Naive thymus-derived CD4-positive, alpha-beta T cell (primary cell): ENCODE measurements at regions of chr1 and their contacts with region 1.

Region 1: GRCh38 chr1:25990702-25991395 is 7.0 kb downstream of the PAFAH2 start:
- DNase-seq: peak in 8 of 9 donors; percentile 31 to 59 (median 56)
- ATAC-seq: peak; percentile 93
- H3K4me3 ChIP-seq: peak overlapping the region; percentile 63
- H3K4me3 Mint-ChIP-seq: peak overlapping the region; percentile 82 to 97 (median 90)
- H3K27ac ChIP-seq: peak overlapping the region; percentile 86
- H3K27ac Mint-ChIP-seq: peak overlapping the region; percentile 81 to 94 (median 91)
- H3K4me1 ChIP-seq: peaks cover 36 to 37% of the 10 kb centered on the region in 2 donors
- H3K4me1 Mint-ChIP-seq: peaks cover 42 to 89% (median 84%) of the 10 kb centered on the region in 7 donors
- H3K27me3 ChIP-seq: no peaks in the 10 kb centered on the region
- H3K27me3 Mint-ChIP-seq: no peaks in the 10 kb centered on the region

Region 2: GRCh38 chr1:25922056-25922969 is 68.5 kb before region 1 on chr1:
- CTCF ChIA-PET with region 1: interaction called, 3 read pairs
- POLR2A ChIA-PET with region 1: interaction called, 15 read pairs
- intact Hi-C with region 1: no loop called
- DNase-seq: peak; percentile 26 to 64 (median 57)
- ATAC-seq: peak; percentile 84
- H3K4me3 ChIP-seq: peak overlapping the region; percentile 79
- H3K4me3 Mint-ChIP-seq: peak overlapping the region; percentile 78 to 91 (median 88)
- H3K27ac ChIP-seq: peak overlapping the region; percentile 60
- H3K27ac Mint-ChIP-seq: peak overlapping the region; percentile 31 to 90 (median 82)
- H3K4me1 ChIP-seq: peaks cover 19 to 20% of the 10 kb centered on the region in 2 donors
- H3K4me1 Mint-ChIP-seq: peaks cover 23 to 56% (median 43%) of the 10 kb centered on the region in 7 donors
- H3K27me3 ChIP-seq: no peaks in the 10 kb centered on the region
- H3K27me3 Mint-ChIP-seq: peaks cover 0 to 57% (median 0%) of the 10 kb centered on the region in 5 donors

Region 3: GRCh38 chr1:25971066-25971810 is 19.6 kb before region 1 on chr1:
- CTCF ChIA-PET with region 1: interaction called, 4 read pairs
- POLR2A ChIA-PET with region 1: interaction called, 173 read pairs
- intact Hi-C with region 1: loop called in 1 of 2 experiments (anchors 1 kb)
- DNase-seq: peak in 7 of 9 donors; percentile 60 to 77 (median 69)
- ATAC-seq: peak; percentile 88
- H3K4me3 ChIP-seq: peak overlapping the region; percentile 34
- H3K4me3 Mint-ChIP-seq: peak overlapping the region; percentile 21 to 80 (median 61)
- H3K27ac ChIP-seq: peak overlapping the region; percentile 61
- H3K27ac Mint-ChIP-seq: peak overlapping the region; percentile 74 to 93 (median 85)
- H3K4me1 ChIP-seq: peaks cover 0 to 23% of the 10 kb centered on the region in 2 donors
- H3K4me1 Mint-ChIP-seq: peaks cover 33 to 74% (median 52%) of the 10 kb centered on the region in 7 donors
- H3K27me3 ChIP-seq: no peaks in the 10 kb centered on the region
- H3K27me3 Mint-ChIP-seq: no peaks in the 10 kb centered on the region

Region 4: DNA sequence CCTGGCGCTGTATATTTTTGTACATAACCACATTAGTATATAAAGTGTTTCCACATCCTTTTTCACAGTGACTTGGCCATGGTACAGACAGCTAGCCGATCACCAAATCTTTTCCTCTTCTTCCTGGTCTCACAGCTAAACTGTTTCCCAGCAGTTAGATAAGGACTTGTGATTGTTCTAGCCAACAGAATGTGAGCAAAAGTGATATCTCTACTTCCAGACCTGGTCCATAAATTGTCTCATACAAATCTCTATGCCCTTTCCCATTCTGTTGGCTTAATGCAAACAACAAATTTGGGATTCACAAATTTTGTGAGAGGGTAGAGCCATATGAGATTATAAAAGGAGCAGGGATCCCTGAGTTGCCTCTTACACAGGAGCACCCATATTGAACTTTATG is 12.4 kb before region 1 on chr1:
- CTCF ChIA-PET with region 1: interaction called, 3 read pairs
- POLR2A ChIA-PET with region 1: interaction called, 20 read pairs
- intact Hi-C with region 1: no loop called
- DNase-seq: no peak
- ATAC-seq: no peak
- H3K4me3 ChIP-seq: no peak overlapping the region
- H3K4me3 Mint-ChIP-seq: no peak overlapping the region
- H3K27ac ChIP-seq: no peak overlapping the region
- H3K27ac Mint-ChIP-seq: peak overlapping the region in 5 of 9 donors; percentile 5 to 79 (median 59)
- H3K4me1 ChIP-seq: peaks cover 0 to 3% of the 10 kb centered on the region in 2 donors
- H3K4me1 Mint-ChIP-seq: peaks cover 3 to 28% (median 12%) of the 10 kb centered on the region in 7 donors
- H3K27me3 ChIP-seq: no peaks in the 10 kb centered on the region
- H3K27me3 Mint-ChIP-seq: no peaks in the 10 kb centered on the region